Endothelial cell of umbilical vein (primary cell): ENCODE measurements at regions of chr2 and their contacts with region 1.

Region 1: DNA sequence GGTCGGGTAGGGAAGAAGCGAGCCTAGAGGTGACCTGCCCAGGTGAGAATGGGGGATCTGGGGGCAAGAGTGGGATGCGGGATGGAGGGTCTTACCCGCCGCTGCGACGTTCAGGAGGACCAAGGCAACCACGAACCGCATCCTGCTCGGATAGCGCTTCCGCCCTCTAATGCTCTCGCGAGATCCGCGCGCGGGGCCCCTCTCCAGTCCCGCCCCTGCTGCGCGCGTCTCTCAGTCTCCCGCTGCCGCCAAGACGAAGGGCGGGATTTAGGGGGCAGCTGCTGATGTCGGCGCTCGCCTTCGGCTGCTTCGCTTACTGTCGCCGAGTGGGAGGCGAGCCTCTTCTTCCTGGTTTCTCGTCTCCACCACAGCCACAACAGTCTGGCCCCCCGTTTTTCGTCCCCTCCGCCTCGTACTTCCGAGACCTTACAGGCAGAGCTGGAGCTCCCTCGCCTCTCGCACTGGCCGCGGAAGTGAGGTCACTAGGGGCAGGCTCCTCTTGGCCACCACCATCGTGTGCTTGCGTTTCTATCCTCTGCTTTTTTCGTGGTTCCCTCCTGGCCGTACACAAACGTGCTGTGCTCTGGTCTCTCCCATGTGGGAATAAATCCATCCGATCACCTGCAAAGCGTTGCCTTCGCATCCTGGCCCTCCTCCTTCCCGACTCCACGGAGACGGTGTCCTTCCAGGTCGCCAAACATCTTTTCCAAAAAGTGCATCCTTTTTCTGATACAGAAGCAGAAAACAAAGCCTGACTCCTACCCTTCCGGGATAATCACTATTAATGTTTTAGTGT is at the start of gene TGOLN2:
- DNase-seq: peak; percentile 91
- H3K4me3 ChIP-seq: peak within 1 kb of the TSS; percentile 80 to 94 (median 82)
- H3K27ac ChIP-seq: peak within 1 kb of the TSS; percentile 86
- H3K4me1 ChIP-seq: peaks cover 29% of the 10 kb centered on the region
- H3K27me3 ChIP-seq: no peaks in the 10 kb centered on the region
- CTCF ChIP-seq: no peak
- POLR2A ChIP-seq: peak; percentile 99
- total RNA-seq, gene TGOLN2: 119 and 140 TPM in 2 replicates

Region 2: DNA sequence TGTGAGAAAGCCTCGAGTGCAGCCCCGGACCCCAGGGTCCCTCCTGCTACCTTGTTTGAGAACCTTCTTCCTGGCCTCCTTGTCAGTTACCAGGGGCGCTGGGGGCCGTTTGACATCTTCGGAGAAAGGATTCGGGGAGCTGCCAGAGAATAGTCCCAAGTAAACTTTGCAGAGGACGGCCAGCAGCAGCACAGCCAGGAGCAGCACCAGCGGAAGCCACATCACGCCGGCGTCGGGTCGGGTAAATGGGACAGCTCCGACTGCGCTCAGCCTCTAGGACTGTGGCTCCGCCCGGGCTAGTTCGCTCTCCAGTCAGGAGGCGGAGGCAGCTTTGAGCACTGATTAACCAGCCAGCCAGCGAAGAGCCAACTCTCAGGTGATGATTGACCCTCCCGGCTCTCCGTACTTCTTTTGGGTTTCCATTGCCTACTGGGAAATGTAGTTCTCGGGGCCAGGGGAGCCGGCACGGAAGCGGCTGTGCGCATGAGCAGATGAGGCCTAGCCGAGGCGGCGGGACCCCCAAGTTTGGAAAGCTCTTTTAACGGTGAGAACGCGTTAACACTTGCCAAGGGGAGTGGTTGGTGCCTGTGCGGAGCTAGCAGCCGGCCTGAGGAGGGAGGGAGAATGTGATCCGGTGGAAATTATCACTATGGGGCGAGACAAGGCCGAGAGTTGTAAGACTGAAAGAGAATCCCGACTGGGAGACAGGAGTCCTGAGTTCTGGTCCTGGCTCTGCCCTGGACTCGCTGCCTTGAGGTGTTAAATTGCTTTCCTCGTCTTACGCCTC is 26.5 kb after region 1 on chr2 and contains the starts of genes ELMOD3 and RETSAT:
- CTCF ChIA-PET with region 1: interaction called, 3 read pairs
- POLR2A ChIA-PET with region 1: interaction called, 6 read pairs
- dilution Hi-C with region 1: no loop called
- intact Hi-C with region 1: loop called (anchors 1 kb)
- DNase-seq: peak; percentile 99
- H3K4me3 ChIP-seq: peak within 1 kb of the TSS; percentile 78 to 97 (median 87)
- H3K27ac ChIP-seq: peak within 1 kb of the TSS; percentile 44
- H3K4me1 ChIP-seq: peaks cover 8% of the 10 kb centered on the region
- H3K27me3 ChIP-seq: no peaks in the 10 kb centered on the region
- CTCF ChIP-seq: no peak
- POLR2A ChIP-seq: peak; percentile 98
- total RNA-seq, gene ELMOD3: 12.3 and 18.5 TPM in 2 replicates
- total RNA-seq, gene RETSAT: 49.9 and 59.1 TPM in 2 replicates

Region 3: DNA sequence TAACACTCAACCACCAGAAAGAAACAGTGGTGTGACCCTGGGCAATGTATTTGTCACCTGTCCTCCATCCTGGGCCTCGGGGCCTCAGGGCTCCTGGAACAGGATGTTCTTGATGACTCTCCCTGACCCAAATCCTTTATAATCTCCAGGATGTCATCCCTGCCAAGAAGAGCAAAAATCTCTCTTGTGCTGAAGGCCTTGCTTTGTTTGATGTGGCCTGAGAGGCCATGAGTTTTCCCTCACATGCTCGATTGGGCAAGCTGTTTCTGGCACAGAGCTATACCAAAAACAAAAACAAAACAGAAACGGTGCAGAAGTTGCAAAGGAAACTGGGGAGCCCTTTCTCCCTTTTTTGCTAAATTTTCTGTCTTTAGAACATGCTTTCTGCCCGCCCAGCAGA is 596.5 kb after region 1 on chr2:
- CTCF ChIA-PET with region 1: no interaction called
- POLR2A ChIA-PET with region 1: no interaction called
- dilution Hi-C with region 1: no loop called
- intact Hi-C with region 1: no loop called
- DNase-seq: peak; percentile 23
- H3K4me3 ChIP-seq: no peak overlapping the region
- H3K27ac ChIP-seq: no peak overlapping the region
- H3K4me1 ChIP-seq: no peaks in the 10 kb centered on the region
- H3K27me3 ChIP-seq: peaks cover 0 to 2% of the 10 kb centered on the region in 2 experiments
- CTCF ChIP-seq: no peak
- POLR2A ChIP-seq: no peak